ENCODE measurements at regions of chr9 and their contacts with region 1.

Region 1: DNA sequence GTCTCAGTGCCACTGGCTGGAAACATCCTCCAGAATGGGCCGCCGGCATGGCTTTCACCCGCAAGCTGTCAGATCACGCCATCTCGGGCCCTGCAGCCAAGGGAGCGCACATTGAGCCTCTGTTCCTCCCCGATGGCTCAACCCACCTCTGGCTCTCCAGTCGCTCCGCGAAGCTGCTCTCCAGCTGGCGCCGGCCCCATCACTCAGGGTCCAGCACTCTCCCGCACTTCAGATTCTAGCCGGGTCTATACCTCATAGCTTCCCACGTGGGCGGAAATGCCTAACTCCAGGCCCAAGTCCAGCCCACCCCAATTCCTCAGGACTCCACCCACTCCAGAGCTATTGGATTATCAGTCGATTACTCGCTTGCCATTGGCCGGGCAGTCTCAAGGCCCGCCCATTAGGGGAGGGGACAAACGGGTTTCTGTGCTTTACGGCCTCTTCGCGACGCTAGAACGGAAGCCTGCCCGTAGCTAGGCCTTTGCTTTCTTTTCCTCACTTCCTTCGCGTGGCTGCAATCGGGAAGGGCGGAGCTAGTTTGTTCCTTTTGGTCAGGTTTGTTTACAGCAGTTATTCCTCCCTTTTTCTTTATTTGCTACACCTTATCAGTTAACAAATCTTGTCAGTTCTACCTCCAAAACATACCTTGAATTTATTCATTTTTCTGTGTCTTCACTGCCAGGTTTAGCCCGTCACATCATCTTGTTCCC is at the start of gene NOL6:
- DNase-seq: peak; percentile 93 to 99 (median 98)
- ATAC-seq: peak; percentile 99 to 100 (median 99)
- H3K4me3 ChIP-seq: peak within 1 kb of the TSS; percentile 61 to 73
- H3K4me3 Mint-ChIP-seq: peak within 1 kb of the TSS; percentile 89 to 99 (median 99)
- H3K27ac ChIP-seq: peak within 1 kb of the TSS; percentile 51
- H3K27ac Mint-ChIP-seq: peak within 1 kb of the TSS; percentile 96 to 99
- H3K4me1 ChIP-seq: peaks cover 7 to 22% of the 10 kb centered on the region in 2 experiments
- H3K4me1 Mint-ChIP-seq: peaks cover 26 to 33% (median 31%) of the 10 kb centered on the region in 3 donors
- H3K27me3 ChIP-seq: no peaks in the 10 kb centered on the region
- H3K27me3 Mint-ChIP-seq: no peaks in the 10 kb centered on the region
- total RNA-seq, gene NOL6: 35.1 to 57.6 (median 47.1) TPM

Region 2: GRCh38 chr9:33374634-33375213 is 99.1 kb before region 1 on chr9:
- CTCF ChIA-PET with region 1: interaction called, 5 to 33 read pairs
- POLR2A ChIA-PET with region 1: interaction called in 1 of 2 experiments, 3 read pairs
- DNase-seq: peak; percentile 35 to 79 (median 62)
- ATAC-seq: peak; percentile 81 to 94 (median 88)
- H3K4me3 ChIP-seq: peak overlapping the region in 1 of 2 donors; percentile 2
- H3K4me3 Mint-ChIP-seq: peak overlapping the region; percentile 25 to 43 (median 32)
- H3K27ac ChIP-seq: no peak overlapping the region
- H3K27ac Mint-ChIP-seq: peak overlapping the region; percentile 64 to 72
- H3K4me1 ChIP-seq: peaks cover 0 to 9% of the 10 kb centered on the region in 2 experiments
- H3K4me1 Mint-ChIP-seq: peaks cover 10 to 14% (median 11%) of the 10 kb centered on the region in 3 donors
- H3K27me3 ChIP-seq: no peaks in the 10 kb centered on the region
- H3K27me3 Mint-ChIP-seq: no peaks in the 10 kb centered on the region

Region 3: GRCh38 chr9:33415501-33416038 is 58.2 kb before region 1 on chr9:
- CTCF ChIA-PET with region 1: interaction called, 3 to 18 read pairs
- POLR2A ChIA-PET with region 1: interaction called, 4 read pairs
- DNase-seq: peak; percentile 84 to 98 (median 95)
- ATAC-seq: peak; percentile 83 to 94 (median 85)
- H3K4me3 ChIP-seq: peak overlapping the region; percentile 10 to 35
- H3K4me3 Mint-ChIP-seq: peak overlapping the region; percentile 63 to 70 (median 70)
- H3K27ac ChIP-seq: peak overlapping the region; percentile 83
- H3K27ac Mint-ChIP-seq: peak overlapping the region; percentile 99 to 100
- H3K4me1 ChIP-seq: peaks cover 30 to 55% of the 10 kb centered on the region in 2 experiments
- H3K4me1 Mint-ChIP-seq: peaks cover 54 to 59% (median 55%) of the 10 kb centered on the region in 3 donors
- H3K27me3 ChIP-seq: no peaks in the 10 kb centered on the region
- H3K27me3 Mint-ChIP-seq: no peaks in the 10 kb centered on the region

Region 4: GRCh38 chr9:33446946-33447798 is 26.6 kb before region 1 on chr9 and contains the start of gene AQP3:
- CTCF ChIA-PET with region 1: interaction called, 5 to 24 read pairs
- POLR2A ChIA-PET with region 1: interaction called, 5 to 12 read pairs
- DNase-seq: peak; percentile 36 to 85 (median 68)
- ATAC-seq: peak; percentile 67 to 74 (median 73)
- H3K4me3 ChIP-seq: peak within 1 kb of the TSS; percentile 77 to 83
- H3K4me3 Mint-ChIP-seq: peak within 1 kb of the TSS; percentile 94 to 98 (median 94)
- H3K27ac ChIP-seq: peak within 1 kb of the TSS; percentile 71
- H3K27ac Mint-ChIP-seq: peak within 1 kb of the TSS; percentile 95 to 98
- H3K4me1 ChIP-seq: peaks cover 19 to 67% of the 10 kb centered on the region in 2 experiments
- H3K4me1 Mint-ChIP-seq: peaks cover 50 to 64% (median 64%) of the 10 kb centered on the region in 3 donors
- H3K27me3 ChIP-seq: no peaks in the 10 kb centered on the region
- H3K27me3 Mint-ChIP-seq: no peaks in the 10 kb centered on the region
- total RNA-seq, gene AQP3: 85.7 to 130 (median 111) TPM

Region 5: GRCh38 chr9:33452828-33453271 is 20.9 kb before region 1 on chr9:
- CTCF ChIA-PET with region 1: interaction called, 5 to 24 read pairs
- POLR2A ChIA-PET with region 1: interaction called, 5 to 12 read pairs
- DNase-seq: peak in 22 of 35 experiments; percentile 9 to 63 (median 30)
- ATAC-seq: peak; percentile 61 to 76 (median 68)
- H3K4me3 ChIP-seq: no peak overlapping the region
- H3K4me3 Mint-ChIP-seq: peak overlapping the region in 2 of 3 donors; percentile 3 to 75
- H3K27ac ChIP-seq: peak overlapping the region; percentile 5
- H3K27ac Mint-ChIP-seq: peak overlapping the region; percentile 89 to 90
- H3K4me1 ChIP-seq: peaks cover 27 to 68% of the 10 kb centered on the region in 2 experiments
- H3K4me1 Mint-ChIP-seq: peaks cover 62 to 71% (median 71%) of the 10 kb centered on the region in 3 donors
- H3K27me3 ChIP-seq: no peaks in the 10 kb centered on the region
- H3K27me3 Mint-ChIP-seq: no peaks in the 10 kb centered on the region